ENCODE measurements at regions of chr14 and their contacts with region 1.

Region 1: GRCh38 chr14:32588448-32589320 is 259.6 kb downstream of the AKAP6 start:
- H3K4me3 Mint-ChIP-seq: no peak overlapping the region
- H3K27ac Mint-ChIP-seq: no peak overlapping the region
- H3K4me1 Mint-ChIP-seq: peaks cover 6% of the 10 kb centered on the region
- H3K27me3 Mint-ChIP-seq: peaks cover 2% of the 10 kb centered on the region

Region 2: GRCh38 chr14:32542507-32542906 is 46.2 kb before region 1 on chr14:
- intact Hi-C with region 1: no loop called
- H3K4me3 Mint-ChIP-seq: no peak overlapping the region
- H3K27ac Mint-ChIP-seq: no peak overlapping the region
- H3K4me1 Mint-ChIP-seq: no peaks in the 10 kb centered on the region
- H3K27me3 Mint-ChIP-seq: no peaks in the 10 kb centered on the region

Region 3: DNA sequence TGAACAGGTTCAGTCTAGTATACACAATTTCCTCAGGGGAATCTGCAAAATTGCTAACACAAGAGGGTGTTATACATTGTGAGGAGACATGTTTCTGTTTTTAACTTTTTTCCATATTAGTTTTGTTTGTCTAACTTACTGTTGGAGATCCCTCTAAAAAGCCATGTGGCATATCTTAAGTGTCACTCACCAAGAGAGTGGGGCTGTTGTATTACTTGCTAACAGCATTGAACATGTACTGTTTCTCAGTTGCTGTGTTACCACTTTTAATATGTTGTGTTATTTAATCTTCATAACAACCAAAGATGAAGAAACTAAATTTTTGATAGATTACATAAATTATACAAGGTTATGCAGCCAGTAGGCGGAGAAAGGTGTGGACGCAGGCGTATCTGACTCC is 195.7 kb after region 1 on chr14:
- intact Hi-C with region 1: no loop called
- H3K4me3 Mint-ChIP-seq: no peak overlapping the region
- H3K27ac Mint-ChIP-seq: no peak overlapping the region
- H3K4me1 Mint-ChIP-seq: no peaks in the 10 kb centered on the region
- H3K27me3 Mint-ChIP-seq: no peaks in the 10 kb centered on the region

Region 4: DNA sequence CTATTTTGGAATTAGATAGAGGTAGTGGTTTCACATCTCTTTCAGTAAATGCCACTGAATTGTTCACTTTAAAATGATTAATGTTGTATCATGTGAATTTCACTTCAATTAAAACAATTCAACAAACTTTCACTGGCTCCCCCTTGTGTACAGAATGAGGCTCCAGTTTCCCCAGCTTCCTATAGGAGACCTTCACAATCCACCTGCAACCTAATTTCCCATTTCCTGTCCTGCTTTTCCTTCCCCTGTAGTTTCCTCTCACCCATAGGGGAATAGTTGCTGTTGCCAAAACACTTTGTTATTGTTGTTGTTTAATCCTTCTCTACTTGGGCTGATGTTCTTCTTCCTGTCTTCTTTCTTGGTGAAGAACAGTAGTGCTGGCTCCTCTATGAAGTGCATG is 409.7 kb after region 1 on chr14:
- intact Hi-C with region 1: loop called (anchors 5 kb)
- H3K4me3 Mint-ChIP-seq: no peak overlapping the region
- H3K27ac Mint-ChIP-seq: no peak overlapping the region
- H3K4me1 Mint-ChIP-seq: no peaks in the 10 kb centered on the region
- H3K27me3 Mint-ChIP-seq: no peaks in the 10 kb centered on the region

Region 5: GRCh38 chr14:33714527-33715222 is 1126.0 kb after region 1 on chr14:
- intact Hi-C with region 1: no loop called
- H3K4me3 Mint-ChIP-seq: no peak overlapping the region
- H3K27ac Mint-ChIP-seq: no peak overlapping the region
- H3K4me1 Mint-ChIP-seq: no peaks in the 10 kb centered on the region
- H3K27me3 Mint-ChIP-seq: no peaks in the 10 kb centered on the region

Measured in dendritic cell treated with granulocyte-macrophage colony-stimulating factor and Interleukin-4, amounts not matched to agents 40 ng/mL and 50 ng/mL, for 4 days (primary cell).